Left cardiac atrium (tissue), 4 donors: ENCODE measurements at regions of chr15 and their contacts with region 1.

Region 1: DNA sequence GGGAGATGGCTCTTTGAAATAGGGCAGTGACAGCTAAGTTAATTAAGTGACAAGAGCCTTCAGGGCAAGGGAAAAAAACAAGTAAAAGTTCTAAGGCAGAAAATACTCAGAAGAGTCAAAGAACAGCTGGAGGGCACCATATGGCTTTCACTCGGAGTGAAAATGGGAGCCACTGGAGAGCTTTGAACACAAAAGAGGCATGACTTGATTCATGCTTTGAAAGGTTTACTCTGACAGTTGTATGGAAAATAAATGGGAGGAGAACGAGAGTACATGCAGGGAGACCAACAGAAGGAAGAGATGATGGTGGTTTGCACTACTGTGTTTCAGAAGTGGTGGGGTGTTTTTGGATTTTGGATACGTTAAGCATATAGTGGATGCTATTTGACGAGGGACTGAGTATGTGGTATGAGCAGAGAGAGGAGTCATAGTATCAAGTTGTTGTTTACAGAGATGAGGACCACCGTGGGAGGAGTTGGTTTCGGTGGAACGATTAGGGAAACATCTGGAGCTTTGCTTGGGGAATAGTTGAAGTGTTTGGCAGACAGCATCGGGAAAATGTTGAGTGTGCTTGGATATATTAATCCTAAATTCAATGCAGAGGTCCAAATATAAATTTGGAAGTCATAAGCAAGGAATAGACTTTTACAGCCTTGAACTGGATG is 411.5 kb downstream of the GABRG3 start:
- DNase-seq: no peak
- ATAC-seq: no peak

Region 2: DNA sequence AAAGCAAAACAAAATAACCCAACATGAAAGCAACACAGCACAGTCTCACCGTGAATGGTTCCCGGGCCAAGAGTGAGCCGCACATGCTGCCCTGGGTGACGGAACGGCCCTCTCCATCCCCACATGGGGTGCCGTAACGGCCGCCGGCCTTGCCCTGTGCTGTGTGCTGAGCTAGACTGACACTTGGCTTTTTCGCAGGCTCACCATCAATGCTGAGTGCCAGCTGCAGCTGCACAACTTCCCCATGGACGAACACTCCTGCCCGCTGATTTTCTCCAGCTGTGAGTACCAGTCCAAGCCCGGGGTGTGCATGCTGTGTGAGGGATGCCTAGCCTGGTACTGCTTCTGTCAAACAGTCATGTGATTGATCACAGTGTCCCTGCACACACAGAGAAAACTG is 53.9 kb before region 1 on chr15:
- intact Hi-C with region 1: loop called in 1 of 2 experiments (anchors 10 kb)
- DNase-seq: no peak
- ATAC-seq: no peak

Region 3: DNA sequence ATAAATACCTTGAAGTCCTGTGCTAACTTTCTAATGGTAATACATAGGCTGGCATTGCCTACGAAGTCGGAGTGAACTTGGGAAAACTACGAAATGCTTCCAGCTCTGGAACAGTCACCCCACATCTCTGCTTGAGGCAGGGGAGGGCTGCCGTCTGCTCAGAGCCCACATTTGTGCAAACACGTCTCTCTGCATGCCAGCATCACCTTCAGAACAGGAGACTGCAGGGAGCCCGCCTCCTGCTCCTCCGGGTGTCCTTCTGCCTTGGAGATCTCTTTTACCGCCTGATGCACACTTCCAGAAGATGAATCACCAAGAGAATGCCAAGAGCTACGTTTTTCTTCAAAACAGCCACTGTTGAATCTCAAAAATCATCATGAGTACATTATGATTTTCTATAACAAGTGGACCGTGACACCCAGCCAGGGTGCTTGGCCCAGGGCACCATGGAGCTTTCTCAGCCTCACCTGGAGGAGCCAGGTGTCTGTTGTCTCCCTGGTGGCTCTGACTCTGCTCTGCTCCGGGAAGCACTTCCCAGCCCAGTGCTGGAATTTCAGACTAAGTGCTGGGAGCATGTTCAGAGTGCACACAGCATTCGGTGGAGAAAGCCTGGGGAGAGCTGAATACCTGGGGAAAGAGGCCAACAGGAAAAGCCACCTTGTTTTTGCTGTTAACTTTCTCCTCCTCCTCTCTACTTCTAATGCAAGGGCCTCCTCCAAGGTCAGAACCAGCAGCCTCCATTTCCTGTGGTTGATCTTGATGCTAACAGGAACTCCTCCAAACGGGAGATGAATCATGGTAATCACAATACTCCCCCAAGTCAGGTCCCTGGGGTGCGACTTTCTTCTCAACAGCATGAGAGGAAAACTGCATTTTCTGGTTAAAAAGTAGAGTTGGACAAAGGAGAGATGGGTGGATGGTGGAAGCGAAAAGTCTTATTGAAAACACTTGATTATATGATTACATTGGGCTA is 56.2 kb after region 1 on chr15:
- intact Hi-C with region 1: no loop called
- DNase-seq: no peak
- ATAC-seq: no peak

Region 4: DNA sequence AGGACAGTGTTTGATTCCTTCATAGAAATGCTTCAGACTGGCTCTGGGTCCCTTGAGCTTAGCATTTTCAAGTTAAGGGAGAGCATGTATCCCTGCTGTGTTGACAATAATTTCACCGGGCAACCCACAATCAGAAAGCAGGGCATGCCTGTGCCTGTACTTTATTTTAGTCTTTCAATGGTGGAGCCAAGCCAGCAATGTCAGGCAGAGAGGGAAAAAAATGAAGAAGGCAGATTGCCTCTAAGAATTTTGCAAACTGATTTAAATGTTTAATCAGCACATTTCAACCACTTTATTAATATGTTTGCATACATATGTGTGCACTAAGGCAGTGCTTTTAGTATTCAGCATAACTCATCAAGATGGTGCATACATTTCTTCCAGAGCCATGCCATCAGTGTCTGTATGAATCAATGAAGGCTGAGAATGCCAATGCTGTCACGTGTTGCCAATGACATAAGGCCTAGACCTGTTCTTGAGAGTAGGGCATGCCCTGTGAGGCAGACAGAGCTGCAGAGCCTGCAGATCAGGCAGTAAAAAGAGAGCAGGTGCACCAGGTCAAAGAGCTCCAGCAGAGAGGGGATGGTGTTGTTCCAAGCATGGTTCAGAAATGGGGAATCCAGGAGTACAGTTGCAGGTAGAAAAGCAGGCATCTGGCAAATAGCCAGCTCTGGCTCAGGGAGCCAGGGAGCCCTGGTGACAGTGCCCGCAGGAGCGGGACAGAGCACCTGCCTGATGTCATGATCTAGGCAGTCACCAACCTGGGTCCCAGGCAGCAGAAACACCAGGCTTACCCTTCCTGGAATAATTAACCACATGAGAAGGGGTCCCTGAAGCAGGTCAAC is 97.0 kb after region 1 on chr15:
- intact Hi-C with region 1: loop called in 1 of 2 experiments (anchors 10 kb)
- DNase-seq: no peak
- ATAC-seq: peak; percentile 63 to 78